Activated T-helper 2 cell treated with anti-CD3 and anti-CD28 coated beads, Interferon-gamma antibody, Interleukin-2, Interleukin-4, amounts not matched to agents 10 μg/mL and 5 μg/mL and 100 μg/mL, durations not matched to agents 14 hours and 24 hours and 36 hours (primary cell): ENCODE measurements at regions of chr6 and their contacts with region 1.

Region 1: DNA sequence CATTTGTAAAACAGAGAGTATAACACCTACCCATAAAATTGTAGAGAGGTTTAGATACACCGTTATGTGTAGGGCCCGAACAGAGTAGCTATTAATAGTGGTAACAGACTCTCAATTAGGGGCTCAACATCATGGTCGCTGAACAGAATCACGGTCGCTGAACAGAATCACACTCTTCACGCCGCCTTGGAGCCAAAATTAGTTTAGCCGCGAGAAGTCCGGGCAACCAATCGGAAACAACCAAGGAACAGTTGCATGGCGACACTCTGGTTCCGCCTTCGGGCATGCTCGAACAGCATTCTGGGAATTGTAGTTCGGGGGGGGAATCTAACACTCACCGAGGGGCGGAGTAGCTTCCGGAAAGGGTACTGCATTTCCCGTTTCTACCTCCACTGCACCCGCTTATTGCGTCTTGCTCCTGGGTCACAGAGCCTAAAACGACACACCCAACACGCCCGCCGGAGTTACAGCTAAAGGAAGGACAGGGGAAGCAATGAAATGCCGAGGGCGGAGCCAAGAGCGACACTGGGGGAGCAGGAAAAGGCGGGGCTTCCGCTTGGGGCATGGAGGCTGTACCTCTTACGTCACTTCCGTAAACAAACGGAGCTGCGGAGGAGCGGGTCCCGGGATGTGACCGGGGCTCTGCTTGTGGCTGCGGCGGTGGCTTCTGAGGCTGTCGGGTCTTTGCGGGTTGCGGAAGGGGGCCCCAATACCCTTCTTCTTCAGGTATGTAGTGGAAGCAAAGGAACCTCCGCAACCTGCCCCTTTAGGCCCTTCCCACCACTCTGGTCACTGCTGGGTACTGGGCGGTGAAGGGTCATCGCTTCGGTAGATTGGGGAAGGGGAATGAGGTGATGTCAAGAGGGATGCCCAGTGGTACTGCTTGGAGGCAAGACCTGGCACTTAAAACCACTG is at the start of gene CCDC28A:
- DNase-seq: peak; percentile 92
- H3K4me3 Mint-ChIP-seq: peak within 1 kb of the TSS; percentile 97
- H3K27ac Mint-ChIP-seq: peak within 1 kb of the TSS; percentile 99
- H3K4me1 Mint-ChIP-seq: peaks cover 23% of the 10 kb centered on the region
- H3K27me3 Mint-ChIP-seq: no peaks in the 10 kb centered on the region
- total RNA-seq, gene CCDC28A: 18.2 and 19.2 TPM in 2 replicates

Region 2: DNA sequence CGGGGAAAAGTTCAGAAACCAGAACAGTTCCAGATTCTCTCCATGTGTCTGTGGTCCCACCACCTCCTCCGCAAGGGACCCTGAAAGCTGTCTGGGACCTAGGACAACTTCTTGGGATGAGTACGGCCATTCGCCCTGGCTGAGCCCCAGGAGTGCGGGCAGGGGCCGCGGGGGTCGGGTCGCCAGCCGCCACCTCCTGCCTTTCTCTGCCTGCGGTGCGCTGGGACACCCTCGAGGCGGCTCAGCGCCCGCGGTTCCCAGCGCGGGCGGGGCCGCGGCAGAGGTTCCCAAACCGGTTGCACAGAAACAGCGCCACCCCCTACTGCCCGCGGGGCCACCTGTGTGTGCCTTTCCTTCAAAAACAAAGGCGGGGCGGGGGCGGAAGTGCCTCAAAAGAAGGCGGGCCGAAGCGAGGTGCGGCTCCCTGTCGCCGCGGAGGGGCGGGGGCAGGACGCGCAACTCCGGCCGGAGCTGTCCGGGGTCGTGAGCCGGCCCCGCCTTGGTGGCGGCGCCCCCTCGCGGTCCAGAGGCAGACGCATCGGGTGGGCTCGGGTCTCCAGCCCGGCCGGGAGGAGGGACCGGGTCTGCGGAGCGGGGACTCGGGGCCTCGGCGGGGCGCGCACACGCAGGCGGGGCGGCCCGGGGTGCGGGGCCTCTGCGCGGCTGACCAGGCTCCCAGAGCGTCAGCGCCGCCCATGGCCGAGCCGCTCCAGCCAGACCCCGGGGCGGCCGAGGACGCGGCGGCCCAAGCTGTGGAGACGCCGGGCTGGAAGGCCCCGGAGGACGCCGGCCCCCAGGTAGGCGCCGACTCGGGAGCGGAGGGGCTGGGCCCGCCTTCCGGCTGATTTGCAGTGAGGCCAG is 369.4 kb before region 1 on chr6 and contains the start of gene HEBP2:
- intact Hi-C with region 1: loop called (anchors 10 kb)
- DNase-seq: peak; percentile 84
- H3K4me3 Mint-ChIP-seq: peak within 1 kb of the TSS; percentile 77
- H3K27ac Mint-ChIP-seq: peak within 1 kb of the TSS; percentile 26
- H3K4me1 Mint-ChIP-seq: peaks cover 18% of the 10 kb centered on the region
- H3K27me3 Mint-ChIP-seq: peaks cover 13% of the 10 kb centered on the region
- total RNA-seq, gene HEBP2: 17.2 and 20.0 TPM in 2 replicates

Region 3: GRCh38 chr6:138692058-138692977 is 81.1 kb before region 1 on chr6:
- intact Hi-C with region 1: loop called (anchors 2 kb)
- DNase-seq: peak; percentile 45
- H3K4me3 Mint-ChIP-seq: peak overlapping the region; percentile 70
- H3K27ac Mint-ChIP-seq: no peak overlapping the region
- H3K4me1 Mint-ChIP-seq: peaks cover 9% of the 10 kb centered on the region
- H3K27me3 Mint-ChIP-seq: peaks cover 57% of the 10 kb centered on the region